ENCODE measurements at regions of chr2 and their contacts with region 1.

Region 1: DNA sequence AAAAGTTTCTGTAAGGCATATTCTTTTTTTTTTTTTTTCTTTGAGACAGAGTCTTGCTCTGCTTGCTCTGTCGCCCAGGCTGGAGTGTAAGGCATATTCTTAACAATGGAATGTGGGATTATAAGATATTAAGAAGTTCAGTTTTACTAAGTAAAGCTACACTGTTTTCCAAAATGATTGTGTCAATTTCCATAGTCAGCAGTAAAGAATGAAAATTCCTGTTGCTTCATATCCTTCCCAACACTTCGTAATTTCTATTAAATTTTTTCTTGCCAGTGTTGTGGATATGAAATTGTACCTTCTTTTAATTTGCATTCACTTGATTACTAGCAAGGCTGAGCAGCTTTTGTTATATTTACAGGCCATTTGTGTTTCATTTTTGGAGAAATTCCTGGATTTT is 24.4 kb upstream of the SLC4A10 start:
- DNase-seq: no peak
- ATAC-seq: no peak
- H3K4me3 ChIP-seq: no peak overlapping the region
- H3K27ac ChIP-seq: no peak overlapping the region
- H3K4me1 ChIP-seq: no peaks in the 10 kb centered on the region
- H3K27me3 ChIP-seq: no peaks in the 10 kb centered on the region
- CTCF ChIP-seq: no peak
- EP300 ChIP-seq: no peak
- POLR2A ChIP-seq: no peak
- RAD21 ChIP-seq: no peak

Region 2: DNA sequence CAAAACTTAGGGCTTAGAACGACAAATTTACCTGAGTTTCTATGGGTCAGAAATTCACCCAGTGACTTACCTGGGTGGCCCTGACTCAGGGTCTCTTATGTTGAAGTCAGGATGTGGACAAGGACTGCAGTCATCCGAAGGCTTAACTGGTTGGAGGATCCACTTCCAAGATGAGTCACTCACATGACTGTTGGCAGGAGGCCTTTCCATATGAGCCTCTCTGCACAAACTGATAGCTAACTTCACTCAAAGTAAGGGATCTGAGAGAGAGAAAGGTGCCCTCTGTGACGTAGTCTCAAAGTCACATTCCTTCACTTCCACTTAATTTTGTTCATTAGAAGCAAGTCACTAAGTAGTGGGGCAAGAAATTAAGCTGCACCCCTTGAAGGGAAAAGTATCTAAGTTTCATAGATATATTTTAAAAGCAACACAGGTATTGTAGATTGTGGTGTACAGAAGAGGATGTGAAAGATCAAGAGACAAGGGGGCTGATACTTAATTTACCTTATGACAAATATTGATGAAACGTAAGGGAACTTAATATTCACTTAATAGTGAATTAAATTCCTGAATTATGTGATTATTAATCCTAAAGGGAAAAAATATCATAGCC is 391.2 kb before region 1 on chr2:
- CTCF ChIA-PET with region 1: no interaction called
- POLR2A ChIA-PET with region 1: no interaction called
- RAD21 ChIA-PET with region 1: no interaction called
- SMC1A ChIA-PET with region 1: no interaction called
- in situ Hi-C with region 1: no loop called
- intact Hi-C with region 1: no loop called
- DNase-seq: no peak
- ATAC-seq: peak; percentile 65
- H3K4me3 ChIP-seq: no peak overlapping the region
- H3K27ac ChIP-seq: no peak overlapping the region
- H3K4me1 ChIP-seq: peaks cover 5% of the 10 kb centered on the region
- H3K27me3 ChIP-seq: no peaks in the 10 kb centered on the region
- CTCF ChIP-seq: no peak
- EP300 ChIP-seq: no peak
- POLR2A ChIP-seq: no peak
- RAD21 ChIP-seq: no peak

Region 3: GRCh38 chr2:161586517-161587167 is 13.2 kb before region 1 on chr2:
- CTCF ChIA-PET with region 1: interaction called, 4 read pairs
- POLR2A ChIA-PET with region 1: no interaction called
- RAD21 ChIA-PET with region 1: no interaction called
- SMC1A ChIA-PET with region 1: interaction called, 15 read pairs
- in situ Hi-C with region 1: no loop called
- intact Hi-C with region 1: no loop called
- DNase-seq: no peak
- ATAC-seq: peak; percentile 60; the same call in 2 of the 3 replicates
- H3K4me3 ChIP-seq: no peak overlapping the region
- H3K27ac ChIP-seq: no peak overlapping the region
- H3K4me1 ChIP-seq: no peaks in the 10 kb centered on the region
- H3K27me3 ChIP-seq: no peaks in the 10 kb centered on the region
- CTCF ChIP-seq: peak; percentile 60 to 65 (median 61)
- EP300 ChIP-seq: no peak
- POLR2A ChIP-seq: no peak
- RAD21 ChIP-seq: peak; percentile 80

Region 4: GRCh38 chr2:161609930-161610329 is 10.1 kb after region 1 on chr2:
- CTCF ChIA-PET with region 1: no interaction called
- POLR2A ChIA-PET with region 1: no interaction called
- RAD21 ChIA-PET with region 1: no interaction called
- SMC1A ChIA-PET with region 1: interaction called, 11 read pairs
- in situ Hi-C with region 1: no loop called
- intact Hi-C with region 1: no loop called
- DNase-seq: no peak
- ATAC-seq: no peak
- H3K4me3 ChIP-seq: no peak overlapping the region
- H3K27ac ChIP-seq: no peak overlapping the region
- H3K4me1 ChIP-seq: no peaks in the 10 kb centered on the region
- H3K27me3 ChIP-seq: no peaks in the 10 kb centered on the region; a peak in 1 of 4 replicates
- CTCF ChIP-seq: no peak
- EP300 ChIP-seq: no peak
- POLR2A ChIP-seq: no peak
- RAD21 ChIP-seq: no peak

Measured in GM12878 (cell line).